B cell (primary cell): ENCODE measurements at regions of chr12 and their contacts with region 1.

Region 1: DNA sequence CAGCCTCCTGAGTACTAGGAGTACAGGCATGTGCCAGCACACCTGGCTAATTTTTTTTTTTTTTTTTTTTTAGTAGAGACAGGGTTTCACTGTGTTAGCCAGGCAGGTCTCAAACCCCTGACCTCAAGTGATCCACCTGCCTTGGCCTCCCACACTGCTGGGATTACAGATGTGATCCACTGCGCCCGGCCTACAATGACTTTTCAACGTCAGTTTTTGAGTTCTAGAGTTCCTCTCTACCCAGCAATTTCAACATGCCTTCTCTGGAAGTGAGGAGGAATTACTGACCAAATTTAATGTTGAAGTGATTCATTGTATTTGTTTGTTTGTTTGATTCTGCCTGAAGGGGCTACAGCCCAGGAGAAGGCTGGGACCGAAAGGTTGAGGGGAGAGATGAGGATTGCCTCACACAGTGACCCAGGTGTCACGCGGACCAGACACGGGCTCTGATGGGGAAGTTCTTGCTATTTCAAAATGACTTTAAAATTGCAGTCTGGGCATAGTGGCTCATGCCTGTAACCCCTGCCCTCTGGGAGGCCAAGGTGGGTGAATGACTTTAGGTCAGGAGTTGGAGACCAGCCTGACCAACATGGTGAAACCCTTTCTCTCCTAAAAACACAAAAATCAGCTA is 8.6 kb upstream of the DENR start:
- DNase-seq: no peak
- ATAC-seq: no peak
- H3K4me3 ChIP-seq: no peak overlapping the region
- H3K4me3 Mint-ChIP-seq: no peak overlapping the region
- H3K27ac ChIP-seq: no peak overlapping the region
- H3K27ac Mint-ChIP-seq: no peak overlapping the region
- H3K4me1 ChIP-seq: no peaks in the 10 kb centered on the region
- H3K4me1 Mint-ChIP-seq: no peaks in the 10 kb centered on the region
- H3K27me3 ChIP-seq: no peaks in the 10 kb centered on the region
- H3K27me3 Mint-ChIP-seq: no peaks in the 10 kb centered on the region
- CTCF ChIP-seq: no peak

Region 2: GRCh38 chr12:122449353-122449752 is 294.7 kb before region 1 on chr12:
- CTCF ChIA-PET with region 1: no interaction called
- POLR2A ChIA-PET with region 1: no interaction called
- intact Hi-C with region 1: no loop called
- DNase-seq: no peak
- ATAC-seq: no peak
- H3K4me3 ChIP-seq: no peak overlapping the region
- H3K4me3 Mint-ChIP-seq: no peak overlapping the region
- H3K27ac ChIP-seq: no peak overlapping the region
- H3K27ac Mint-ChIP-seq: no peak overlapping the region
- H3K4me1 ChIP-seq: peaks cover 18% of the 10 kb centered on the region in 2 donors
- H3K4me1 Mint-ChIP-seq: peaks cover 16% of the 10 kb centered on the region
- H3K27me3 ChIP-seq: no peaks in the 10 kb centered on the region
- H3K27me3 Mint-ChIP-seq: no peaks in the 10 kb centered on the region
- CTCF ChIP-seq: no peak

Region 3: GRCh38 chr12:122721057-122721545 is 22.9 kb before region 1 on chr12:
- CTCF ChIA-PET with region 1: no interaction called
- POLR2A ChIA-PET with region 1: interaction called, 10 read pairs
- intact Hi-C with region 1: no loop called
- DNase-seq: no peak
- ATAC-seq: no peak
- H3K4me3 ChIP-seq: no peak overlapping the region
- H3K4me3 Mint-ChIP-seq: peak overlapping the region; percentile 37
- H3K27ac ChIP-seq: no peak overlapping the region
- H3K27ac Mint-ChIP-seq: no peak overlapping the region
- H3K4me1 ChIP-seq: peaks cover 11 to 21% of the 10 kb centered on the region in 2 donors
- H3K4me1 Mint-ChIP-seq: peaks cover 34% of the 10 kb centered on the region
- H3K27me3 ChIP-seq: no peaks in the 10 kb centered on the region
- H3K27me3 Mint-ChIP-seq: peaks cover 11% of the 10 kb centered on the region
- CTCF ChIP-seq: no peak